ENCODE measurements at regions of chr11 and their contacts with region 1.

Region 1: GRCh38 chr11:65314501-65315203 is at the start of gene CDC42EP2:
- DNase-seq: peak; percentile 79
- ATAC-seq: peak; percentile 93
- H3K4me3 Mint-ChIP-seq: peak within 1 kb of the TSS; percentile 71
- H3K27ac Mint-ChIP-seq: no peak within 1 kb of the TSS
- H3K4me1 Mint-ChIP-seq: peaks cover 8% of the 10 kb centered on the region
- H3K27me3 Mint-ChIP-seq: peaks cover 16% of the 10 kb centered on the region
- total RNA-seq, gene CDC42EP2: 0.29 to 1.2 TPM

Region 2: DNA sequence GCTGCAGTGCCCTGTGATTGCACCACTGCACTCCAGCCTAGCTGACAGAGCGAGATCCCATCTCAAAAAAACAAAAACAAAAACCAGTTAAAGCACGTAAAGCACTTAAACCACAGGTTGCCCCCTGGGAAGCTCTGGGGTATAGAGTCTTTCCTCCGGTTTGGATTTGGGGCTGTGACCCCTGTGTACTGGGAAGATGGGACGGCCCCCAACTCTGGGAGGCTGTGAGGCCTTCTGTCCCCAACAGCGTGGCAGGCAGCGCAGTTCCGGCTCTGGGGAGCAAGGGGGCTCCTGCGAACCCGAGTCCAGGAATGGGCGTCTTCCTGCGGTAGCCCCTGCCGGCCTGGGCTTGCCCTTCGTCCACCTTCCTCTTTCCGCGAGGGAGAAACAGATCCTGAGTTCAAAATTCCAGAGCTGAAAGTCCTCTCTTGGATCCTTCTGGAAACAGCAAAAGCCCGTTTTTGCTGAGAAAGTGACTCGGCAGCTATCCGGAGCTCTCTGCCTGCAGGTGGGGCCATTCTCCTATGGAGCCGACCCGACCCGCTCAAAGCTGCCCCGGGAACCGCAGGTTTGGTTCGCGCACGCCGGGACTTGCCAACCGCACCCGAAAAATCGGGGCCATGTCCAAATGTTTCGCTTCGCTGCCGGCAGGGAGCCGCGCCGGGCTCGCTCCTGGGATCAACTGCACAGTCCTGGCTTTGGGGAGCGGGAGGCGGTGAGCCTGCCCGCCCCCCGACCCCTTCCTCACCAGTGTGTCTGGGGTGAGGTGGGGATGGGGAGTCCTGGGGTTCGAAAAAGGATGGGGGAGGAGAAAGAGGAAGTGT is 89.2 kb before region 1 on chr11:
- CTCF ChIA-PET with region 1: interaction called, 60 read pairs
- POLR2A ChIA-PET with region 1: no interaction called
- DNase-seq: peak; percentile 67
- ATAC-seq: peak; percentile 86
- H3K4me3 Mint-ChIP-seq: peak overlapping the region; percentile 72
- H3K27ac Mint-ChIP-seq: no peak overlapping the region
- H3K4me1 Mint-ChIP-seq: peaks cover 27% of the 10 kb centered on the region
- H3K27me3 Mint-ChIP-seq: peaks cover 18% of the 10 kb centered on the region

Region 3: GRCh38 chr11:65290448-65291165 is 24.0 kb before region 1 on chr11:
- CTCF ChIA-PET with region 1: interaction called, 39 read pairs
- POLR2A ChIA-PET with region 1: no interaction called
- DNase-seq: no peak
- ATAC-seq: no peak
- H3K4me3 Mint-ChIP-seq: no peak overlapping the region
- H3K27ac Mint-ChIP-seq: no peak overlapping the region
- H3K4me1 Mint-ChIP-seq: no peaks in the 10 kb centered on the region
- H3K27me3 Mint-ChIP-seq: no peaks in the 10 kb centered on the region

Region 4: GRCh38 chr11:65340226-65340625 is 25.6 kb after region 1 on chr11:
- CTCF ChIA-PET with region 1: interaction called, 215 read pairs
- POLR2A ChIA-PET with region 1: no interaction called
- DNase-seq: no peak
- ATAC-seq: no peak
- H3K4me3 Mint-ChIP-seq: no peak overlapping the region
- H3K27ac Mint-ChIP-seq: no peak overlapping the region
- H3K4me1 Mint-ChIP-seq: peaks cover 24% of the 10 kb centered on the region
- H3K27me3 Mint-ChIP-seq: no peaks in the 10 kb centered on the region

Region 5: GRCh38 chr11:65386307-65387081 is 71.8 kb after region 1 on chr11 and contains the start of gene FRMD8:
- CTCF ChIA-PET with region 1: no interaction called
- POLR2A ChIA-PET with region 1: no interaction called
- DNase-seq: peak; percentile 89
- ATAC-seq: peak; percentile 64
- H3K4me3 Mint-ChIP-seq: peak within 1 kb of the TSS; percentile 94
- H3K27ac Mint-ChIP-seq: peak within 1 kb of the TSS; percentile 97
- H3K4me1 Mint-ChIP-seq: peaks cover 76% of the 10 kb centered on the region
- H3K27me3 Mint-ChIP-seq: no peaks in the 10 kb centered on the region
- total RNA-seq, gene FRMD8: 51.0 to 54.7 TPM